ENCODE measurements at regions of chr2 and their contacts with region 1.

Region 1: GRCh38 chr2:209577376-209578357 is 153.8 kb downstream of the MAP2 start:
- DNase-seq: no peak
- H3K4me3 ChIP-seq: no peak overlapping the region
- H3K27ac ChIP-seq: no peak overlapping the region
- H3K4me1 ChIP-seq: no peaks in the 10 kb centered on the region
- H3K27me3 ChIP-seq: no peaks in the 10 kb centered on the region
- CTCF ChIP-seq: peak; percentile 67

Region 2: GRCh38 chr2:209960676-209961630 is 383.3 kb after region 1 on chr2:
- CTCF ChIA-PET with region 1: interaction called, 5 read pairs
- POLR2A ChIA-PET with region 1: no interaction called
- intact Hi-C with region 1: loop called (anchors 10 kb)
- DNase-seq: peak in 1 of 2 experiments; percentile 23
- H3K4me3 ChIP-seq: no peak overlapping the region
- H3K27ac ChIP-seq: no peak overlapping the region
- H3K4me1 ChIP-seq: no peaks in the 10 kb centered on the region
- H3K27me3 ChIP-seq: no peaks in the 10 kb centered on the region
- CTCF ChIP-seq: peak; percentile 72